RWPE1 (cell line): ENCODE measurements at regions of chr11 and their contacts with region 1.

Region 1: GRCh38 chr11:76885390-76886097 is 24.8 kb downstream of the ACER3 start:
- DNase-seq: peak; percentile 62
- H3K27ac ChIP-seq: no peak overlapping the region; the same call in 1 of the 2 replicates
- CTCF ChIP-seq: no peak

Region 2: GRCh38 chr11:78730267-78730824 is 1844.8 kb after region 1 on chr11:
- CTCF ChIA-PET with region 1: interaction called, 10 read pairs
- POLR2A ChIA-PET with region 1: no interaction called
- DNase-seq: no peak
- H3K27ac ChIP-seq: no peak overlapping the region
- CTCF ChIP-seq: no peak